ENCODE measurements at regions of chr13 and their contacts with region 1.

Region 1: GRCh38 chr13:105969761-105970160 is 565.7 kb downstream of the EFNB2 start:
- DNase-seq: no peak

Region 2: GRCh38 chr13:106038752-106039151 is 69.0 kb after region 1 on chr13:
- intact Hi-C with region 1: loop called in 1 of 2 experiments (anchors 2 kb)
- DNase-seq: no peak